Activated CD4-positive, alpha-beta memory T cell treated with anti-CD3 and anti-CD28 coated beads for 36 hours (primary cell): ENCODE measurements at regions of chr21 and their contacts with region 1.

Region 1: DNA sequence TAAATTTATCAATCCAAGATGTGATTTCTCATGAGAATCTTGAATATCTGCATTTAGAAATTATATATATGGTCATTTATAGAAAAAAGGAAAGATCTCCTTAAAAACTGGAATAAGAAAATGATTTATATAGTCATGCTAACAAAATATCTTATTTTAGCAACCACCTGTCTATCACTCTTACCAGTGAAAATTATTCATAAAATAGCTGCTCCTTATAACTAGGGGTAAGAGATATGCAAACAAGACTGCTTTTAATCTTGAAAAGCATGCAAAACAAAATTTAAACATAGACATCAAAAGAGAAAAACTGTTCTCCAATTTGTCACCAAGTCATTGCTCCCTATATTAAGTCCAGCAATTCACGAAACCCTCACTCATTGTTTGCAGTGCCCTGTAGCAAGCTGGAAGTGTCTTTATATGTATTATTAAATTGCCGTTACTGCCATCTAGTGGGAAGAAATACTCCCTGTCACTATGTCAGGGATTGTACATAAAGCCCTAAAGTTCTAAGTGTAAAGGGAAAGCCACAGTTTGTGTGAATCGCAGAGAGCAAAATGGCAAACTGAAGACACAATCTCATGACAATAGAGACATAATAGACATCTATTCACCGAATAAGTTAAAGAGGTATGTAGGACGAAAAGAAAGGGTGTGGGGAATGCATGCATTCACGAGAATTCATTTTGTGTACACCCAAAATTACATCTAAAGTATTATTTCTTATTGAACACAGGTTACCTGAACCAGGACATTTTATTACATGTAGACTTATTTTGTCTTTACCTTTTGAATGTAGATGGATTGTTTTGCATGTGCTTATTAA is 600.5 kb downstream of the USP25 start:
- DNase-seq: no peak
- H3K4me3 Mint-ChIP-seq: no peak overlapping the region
- H3K27ac Mint-ChIP-seq: no peak overlapping the region
- H3K4me1 Mint-ChIP-seq: no peaks in the 10 kb centered on the region
- H3K27me3 Mint-ChIP-seq: peaks cover 1% of the 10 kb centered on the region

Region 2: DNA sequence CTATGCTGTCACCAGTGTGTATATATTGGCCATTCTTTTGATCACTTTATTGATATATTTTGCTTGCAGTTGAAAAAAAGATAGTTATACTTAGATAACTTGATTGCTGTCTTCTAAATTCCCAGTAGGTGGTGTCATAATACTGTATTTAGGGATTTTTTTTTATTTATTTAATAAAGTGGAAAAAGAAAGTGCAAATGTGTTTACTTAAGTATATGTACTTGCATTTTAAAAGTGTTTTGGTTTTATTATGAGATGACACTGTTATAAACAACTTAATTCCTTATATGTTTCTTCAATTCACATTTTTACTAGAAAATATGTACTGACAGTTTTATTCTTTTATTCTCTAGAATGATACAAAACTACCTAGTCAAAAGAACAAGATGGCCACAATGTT is 435.7 kb before region 1 on chr21:
- CTCF ChIA-PET with region 1: no interaction called
- POLR2A ChIA-PET with region 1: no interaction called
- intact Hi-C with region 1: loop called (anchors 5 kb)
- DNase-seq: no peak
- H3K4me3 Mint-ChIP-seq: no peak overlapping the region
- H3K27ac Mint-ChIP-seq: no peak overlapping the region
- H3K4me1 Mint-ChIP-seq: no peaks in the 10 kb centered on the region
- H3K27me3 Mint-ChIP-seq: no peaks in the 10 kb centered on the region

Region 3: DNA sequence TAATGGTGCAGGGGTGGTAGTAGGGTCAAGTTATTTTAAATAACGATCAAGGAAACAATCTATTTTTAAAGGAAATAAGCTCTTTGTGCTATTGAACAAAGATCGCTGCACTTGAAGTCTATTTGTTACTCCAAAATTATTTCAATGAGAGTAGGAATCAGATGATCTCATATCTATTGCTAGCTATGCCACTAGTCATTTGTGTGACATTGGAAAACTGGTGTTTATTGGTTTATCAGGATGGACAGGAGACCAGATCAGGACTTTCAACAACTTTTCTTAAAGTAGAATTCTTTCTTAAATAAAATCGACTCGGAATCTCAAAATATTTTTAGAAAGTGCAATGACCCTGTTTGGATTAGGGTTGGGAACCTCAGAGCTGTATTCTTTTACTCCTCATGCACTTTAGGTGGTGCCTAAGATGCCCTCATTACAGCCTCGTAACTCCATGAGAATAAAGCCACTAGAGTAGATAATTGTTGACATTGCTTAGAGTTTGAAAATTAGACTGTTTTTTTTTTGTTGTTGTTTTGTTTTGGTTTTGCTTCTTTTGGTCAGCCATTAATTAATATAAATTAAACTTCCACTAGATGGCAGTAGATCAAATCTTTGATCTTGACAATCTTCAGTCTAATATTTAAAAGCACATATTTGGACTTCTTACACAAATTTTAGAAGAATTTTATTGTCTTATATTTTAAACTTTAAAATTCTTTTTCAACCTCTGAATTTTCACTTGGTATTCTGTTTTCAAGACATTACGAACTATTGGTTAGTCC is 248.1 kb before region 1 on chr21:
- CTCF ChIA-PET with region 1: interaction called, 10 read pairs
- POLR2A ChIA-PET with region 1: no interaction called
- intact Hi-C with region 1: loop called (anchors 2 kb)
- DNase-seq: no peak
- H3K4me3 Mint-ChIP-seq: no peak overlapping the region
- H3K27ac Mint-ChIP-seq: no peak overlapping the region
- H3K4me1 Mint-ChIP-seq: no peaks in the 10 kb centered on the region
- H3K27me3 Mint-ChIP-seq: no peaks in the 10 kb centered on the region

Region 4: GRCh38 chr21:16124378-16125130 is 205.7 kb before region 1 on chr21:
- CTCF ChIA-PET with region 1: no interaction called
- POLR2A ChIA-PET with region 1: no interaction called
- intact Hi-C with region 1: no loop called
- DNase-seq: no peak
- H3K4me3 Mint-ChIP-seq: no peak overlapping the region
- H3K27ac Mint-ChIP-seq: no peak overlapping the region
- H3K4me1 Mint-ChIP-seq: no peaks in the 10 kb centered on the region
- H3K27me3 Mint-ChIP-seq: no peaks in the 10 kb centered on the region

Region 5: DNA sequence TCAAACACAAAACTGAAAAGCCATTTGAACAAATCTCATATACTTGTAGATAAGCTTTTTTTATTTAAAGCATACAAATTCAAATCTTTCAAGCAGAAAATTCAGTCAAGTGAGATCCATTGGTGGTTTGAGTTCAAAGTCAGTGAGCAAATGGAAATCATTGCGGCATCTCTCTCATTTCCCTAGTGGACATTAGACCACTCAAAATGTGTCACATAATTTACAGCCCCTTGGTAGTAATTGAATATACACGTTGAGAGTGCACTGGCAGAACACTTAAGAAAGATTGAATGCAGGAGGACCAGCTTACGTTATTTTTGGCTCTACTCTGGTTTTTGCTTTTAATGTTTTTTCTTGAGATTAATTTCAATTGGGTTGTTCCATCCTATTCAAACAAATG is 33.2 kb after region 1 on chr21:
- CTCF ChIA-PET with region 1: no interaction called
- POLR2A ChIA-PET with region 1: no interaction called
- intact Hi-C with region 1: no loop called
- DNase-seq: no peak
- H3K4me3 Mint-ChIP-seq: no peak overlapping the region
- H3K27ac Mint-ChIP-seq: no peak overlapping the region
- H3K4me1 Mint-ChIP-seq: no peaks in the 10 kb centered on the region
- H3K27me3 Mint-ChIP-seq: no peaks in the 10 kb centered on the region